PC-9 (cell line): ENCODE measurements at regions of chr7 and their contacts with region 1.

Region 1: GRCh38 chr7:20330240-20330927 is at the start of gene ITGB8:
- DNase-seq: peak; percentile 86 to 87
- H3K4me3 ChIP-seq: peak within 1 kb of the TSS; percentile 63
- H3K27ac ChIP-seq: peak within 1 kb of the TSS; percentile 77
- H3K4me1 ChIP-seq: peaks cover 49% of the 10 kb centered on the region
- H3K27me3 ChIP-seq: no peaks in the 10 kb centered on the region
- CTCF ChIP-seq: no peak
- total RNA-seq, gene ITGB8: 19.4 and 20.1 TPM in 2 replicates

Region 2: DNA sequence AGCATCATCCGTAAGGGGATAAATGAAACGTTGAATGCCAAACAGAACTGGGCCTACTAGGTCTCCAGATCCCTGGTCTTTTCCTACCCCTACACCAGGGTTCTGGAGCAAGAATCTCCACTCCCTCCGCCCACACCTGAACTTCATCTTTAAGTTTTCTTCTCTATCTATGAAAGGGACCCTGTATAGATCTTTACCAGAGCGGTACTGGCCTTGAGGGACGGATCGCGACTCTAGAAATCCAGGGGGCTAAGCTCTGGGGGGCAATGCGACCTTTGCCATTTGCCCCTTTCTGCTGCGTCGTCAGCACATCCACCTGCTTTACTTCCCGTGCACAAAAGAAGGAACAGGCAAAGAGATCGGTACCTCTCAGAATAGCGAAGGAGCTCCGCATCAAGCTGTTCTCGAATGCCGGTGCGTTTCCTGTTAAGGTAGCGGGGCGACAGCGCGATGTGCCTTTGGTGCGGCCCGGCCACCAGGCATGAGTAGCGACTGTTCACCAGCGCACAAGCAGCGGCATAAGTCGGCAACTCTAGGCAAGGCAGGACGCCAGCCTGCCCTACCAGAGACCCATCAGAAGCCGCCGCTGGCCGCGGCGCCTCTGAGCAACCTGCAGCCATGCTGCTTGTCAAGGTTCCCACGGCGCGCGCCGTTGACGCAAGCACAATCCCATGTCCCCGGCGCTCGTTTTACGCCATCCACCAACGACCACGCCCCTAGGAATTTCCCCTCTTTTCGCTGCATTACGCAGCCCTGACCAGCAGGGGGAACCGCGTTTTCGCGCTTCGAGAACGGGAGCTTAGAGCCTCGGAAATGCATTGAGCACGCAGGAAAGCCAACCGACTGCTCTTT is 621.8 kb before region 1 on chr7 and contains the start of gene POLR1F:
- CTCF ChIA-PET with region 1: interaction called, 14 read pairs
- POLR2A ChIA-PET with region 1: interaction called, 8 read pairs
- intact Hi-C with region 1: loop called (anchors 5 kb)
- DNase-seq: peak; percentile 93 to 95
- H3K4me3 ChIP-seq: peak within 1 kb of the TSS; percentile 87
- H3K27ac ChIP-seq: peak within 1 kb of the TSS; percentile 35
- H3K4me1 ChIP-seq: peaks cover 22% of the 10 kb centered on the region
- H3K27me3 ChIP-seq: no peaks in the 10 kb centered on the region
- CTCF ChIP-seq: peak; percentile 97
- total RNA-seq, gene POLR1F: 14.5 and 14.8 TPM in 2 replicates

Region 3: GRCh38 chr7:19747740-19748339 is 582.5 kb before region 1 on chr7:
- CTCF ChIA-PET with region 1: interaction called, 6 read pairs
- POLR2A ChIA-PET with region 1: no interaction called
- intact Hi-C with region 1: loop called (anchors 5 kb)
- DNase-seq: peak in 1 of 2 experiments; percentile 60
- H3K4me3 ChIP-seq: no peak overlapping the region
- H3K27ac ChIP-seq: no peak overlapping the region
- H3K4me1 ChIP-seq: 0 out of 2 replicates have a peak, but pooled peaks cover 5% of the 10 kb centered on the region
- H3K27me3 ChIP-seq: no peaks in the 10 kb centered on the region
- CTCF ChIP-seq: peak; percentile 94

Region 4: GRCh38 chr7:20299647-20300312 is 30.6 kb before region 1 on chr7:
- CTCF ChIA-PET with region 1: no interaction called
- POLR2A ChIA-PET with region 1: interaction called, 4 read pairs
- intact Hi-C with region 1: loop called (anchors 2 kb)
- DNase-seq: no peak
- H3K4me3 ChIP-seq: no peak overlapping the region
- H3K27ac ChIP-seq: no peak overlapping the region
- H3K4me1 ChIP-seq: peaks cover 20% of the 10 kb centered on the region
- H3K27me3 ChIP-seq: no peaks in the 10 kb centered on the region
- CTCF ChIP-seq: no peak

Region 5: DNA sequence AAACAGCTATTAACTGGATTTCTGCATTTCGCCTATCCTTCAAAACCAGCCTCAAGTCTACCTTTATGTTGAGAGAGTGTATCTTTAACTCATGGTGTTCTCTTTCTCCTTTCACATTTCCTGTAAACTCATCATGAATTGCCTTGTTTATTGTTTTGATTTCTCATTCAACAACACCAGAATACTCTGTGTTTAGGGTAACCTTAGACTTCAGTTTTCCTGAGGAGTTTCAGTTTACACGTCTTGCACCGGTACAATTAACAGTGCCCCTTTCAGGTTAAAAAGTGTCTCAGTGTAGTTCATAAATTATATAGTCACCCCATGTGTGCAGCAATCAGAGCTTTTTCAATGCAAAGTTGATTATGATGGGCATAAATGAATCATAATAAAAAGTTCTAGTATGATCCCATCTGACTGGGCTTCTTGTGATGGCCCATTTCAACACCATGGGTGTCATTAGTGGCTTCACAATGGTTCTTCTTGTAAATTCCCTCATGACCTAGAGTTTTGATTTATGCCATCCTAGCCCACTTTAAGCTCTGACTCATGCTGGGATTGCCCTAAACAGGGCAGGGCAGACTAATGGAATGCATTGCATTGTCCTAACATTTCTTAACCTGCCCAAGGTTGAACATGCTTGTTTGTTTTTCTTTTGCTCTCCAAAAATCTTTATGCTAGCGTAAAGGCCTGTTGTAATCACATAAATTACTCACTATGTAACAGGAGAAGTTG is 22.4 kb after region 1 on chr7:
- CTCF ChIA-PET with region 1: no interaction called
- POLR2A ChIA-PET with region 1: interaction called, 5 read pairs
- intact Hi-C with region 1: loop called (anchors 1 kb)
- DNase-seq: peak; percentile 73 to 100
- H3K4me3 ChIP-seq: peak overlapping the region; percentile 15; the same call in 1 of the 2 replicates
- H3K27ac ChIP-seq: peak overlapping the region; percentile 92
- H3K4me1 ChIP-seq: peaks cover 38% of the 10 kb centered on the region
- H3K27me3 ChIP-seq: no peaks in the 10 kb centered on the region
- CTCF ChIP-seq: no peak

Region 6: GRCh38 chr7:20365486-20365885 is 35.1 kb after region 1 on chr7:
- CTCF ChIA-PET with region 1: no interaction called
- POLR2A ChIA-PET with region 1: no interaction called
- intact Hi-C with region 1: no loop called
- DNase-seq: no peak
- H3K4me3 ChIP-seq: no peak overlapping the region
- H3K27ac ChIP-seq: no peak overlapping the region
- H3K4me1 ChIP-seq: no peaks in the 10 kb centered on the region
- H3K27me3 ChIP-seq: no peaks in the 10 kb centered on the region
- CTCF ChIP-seq: no peak

Region 7: GRCh38 chr7:20598459-20599309 is 268.3 kb after region 1 on chr7:
- CTCF ChIA-PET with region 1: interaction called, 4 read pairs
- POLR2A ChIA-PET with region 1: interaction called, 4 read pairs
- intact Hi-C with region 1: loop called (anchors 5 kb)
- DNase-seq: peak; percentile 4 to 71
- H3K4me3 ChIP-seq: no peak overlapping the region
- H3K27ac ChIP-seq: no peak overlapping the region
- H3K4me1 ChIP-seq: no peaks in the 10 kb centered on the region; the same call in 1 of the 2 replicates
- H3K27me3 ChIP-seq: no peaks in the 10 kb centered on the region
- CTCF ChIP-seq: peak; percentile 97